ENCODE measurements at regions of chr1 and their contacts with region 1.

Region 1: DNA sequence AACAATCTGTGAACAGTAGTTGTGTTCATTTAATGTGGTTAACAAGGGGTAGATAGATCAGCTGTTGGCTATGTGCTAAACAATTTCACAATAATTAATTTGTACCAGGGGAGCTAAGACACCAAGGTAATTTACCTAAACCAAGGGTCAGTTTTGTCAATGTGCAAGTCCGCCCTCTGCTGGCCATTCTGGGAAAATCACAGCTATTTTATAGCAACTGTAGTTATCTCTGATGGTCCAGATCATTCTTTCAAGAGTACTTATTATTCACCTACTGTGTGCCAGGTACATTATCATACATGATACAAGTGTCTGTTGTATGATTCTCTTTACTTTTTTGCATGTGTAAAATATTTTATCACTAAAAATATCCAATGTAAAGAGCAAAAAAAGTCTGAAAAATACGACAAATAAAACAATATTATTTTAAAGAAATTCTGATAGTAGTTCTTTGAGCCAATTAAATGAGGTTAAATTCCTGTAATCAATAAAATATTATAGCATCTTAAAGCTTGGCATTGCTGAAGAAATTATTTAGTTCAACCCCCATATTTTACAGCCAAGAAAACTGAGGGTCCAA is 312.3 kb upstream of the FAM78B start:
- DNase-seq: peak; percentile 30
- ATAC-seq: no peak; the same call in 2 of the 3 replicates
- H3K4me3 ChIP-seq: no peak overlapping the region
- H3K27ac ChIP-seq: no peak overlapping the region
- H3K4me1 ChIP-seq: no peaks in the 10 kb centered on the region
- H3K27me3 ChIP-seq: no peaks in the 10 kb centered on the region
- CTCF ChIP-seq: peak; percentile 74
- EP300 ChIP-seq: no peak
- POLR2A ChIP-seq: no peak
- RAD21 ChIP-seq: 0 out of 2 replicates have a peak, but pooled peaks have one; percentile 25

Region 2: DNA sequence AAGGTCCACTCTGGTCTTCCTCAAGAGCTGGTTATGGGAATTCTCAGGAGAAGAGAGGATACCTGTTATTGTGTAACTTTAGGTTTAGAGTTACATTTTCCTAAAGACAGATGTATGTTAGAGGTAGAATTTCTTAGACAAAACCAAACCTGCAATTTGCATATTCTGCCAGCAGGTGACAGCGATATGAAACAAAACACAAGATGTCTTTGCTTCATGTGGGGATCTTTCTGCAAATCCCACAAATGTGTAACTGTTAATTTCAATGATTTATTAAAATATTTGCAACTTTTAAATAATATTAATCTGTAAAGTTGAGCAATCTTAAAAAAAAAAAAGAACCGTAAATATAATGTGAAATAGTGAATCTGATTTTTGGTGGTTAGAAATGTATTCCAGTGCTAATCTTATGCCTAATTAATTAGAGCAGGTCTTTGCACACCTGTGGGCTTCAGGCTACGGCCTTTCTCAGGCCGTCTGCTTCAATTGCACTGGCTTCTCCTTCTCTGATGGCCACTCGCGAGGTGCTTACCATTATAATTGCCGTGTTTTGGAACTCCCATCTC is 345.8 kb before region 1 on chr1:
- CTCF ChIA-PET with region 1: interaction called, 7 read pairs
- POLR2A ChIA-PET with region 1: no interaction called
- in situ Hi-C with region 1: no loop called
- intact Hi-C with region 1: loop called (anchors 1 kb)
- DNase-seq: no peak
- ATAC-seq: no peak
- H3K4me3 ChIP-seq: no peak overlapping the region
- H3K27ac ChIP-seq: no peak overlapping the region
- H3K4me1 ChIP-seq: no peaks in the 10 kb centered on the region
- H3K27me3 ChIP-seq: no peaks in the 10 kb centered on the region
- CTCF ChIP-seq: peak; percentile 40
- EP300 ChIP-seq: no peak
- POLR2A ChIP-seq: no peak
- RAD21 ChIP-seq: no peak

Measured in HepG2 (cell line).